ENCODE measurements at regions of chr6 and their contacts with region 1.

Region 1: DNA sequence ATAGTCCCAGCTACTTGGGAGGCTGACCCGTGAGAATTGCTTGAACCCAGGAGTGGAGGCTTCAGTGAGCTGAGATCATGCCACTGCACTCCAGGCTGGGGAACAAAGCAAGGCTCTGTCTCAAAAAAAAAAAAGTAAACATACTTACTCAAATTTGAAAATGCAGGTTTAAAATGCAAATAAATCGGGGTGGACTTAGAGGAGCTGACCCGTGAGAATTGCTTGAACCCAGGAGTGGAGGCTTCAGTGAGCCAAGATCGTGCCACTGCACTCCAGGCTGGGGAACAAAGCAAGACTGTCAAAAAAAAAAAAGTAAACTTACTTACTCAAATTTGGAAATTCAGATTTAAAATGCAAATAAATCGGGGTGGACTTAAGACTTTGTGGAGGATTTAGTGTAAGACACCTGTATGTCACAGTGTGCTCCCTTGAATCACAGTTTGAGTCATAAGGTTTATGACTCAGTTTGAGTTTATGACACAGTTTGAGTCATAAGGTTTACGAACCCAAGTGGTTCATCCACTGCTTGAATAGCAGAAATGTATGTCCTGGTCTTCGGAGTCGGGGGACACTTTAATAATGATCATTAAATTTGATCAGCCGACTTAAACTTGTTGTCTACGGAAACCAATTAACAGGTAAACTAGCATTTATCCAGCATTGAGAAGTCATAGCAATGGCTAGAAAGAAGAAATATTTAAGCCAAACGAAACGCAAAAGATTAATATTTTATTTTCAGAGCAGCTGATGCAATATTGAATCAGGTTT is 6.7 kb upstream of the MRPS10 start:
- DNase-seq: peak; percentile 17
- H3K4me3 Mint-ChIP-seq: peak overlapping the region; percentile 36
- H3K27ac Mint-ChIP-seq: peak overlapping the region; percentile 80
- H3K4me1 Mint-ChIP-seq: peaks cover 22% of the 10 kb centered on the region
- H3K27me3 Mint-ChIP-seq: no peaks in the 10 kb centered on the region

Region 2: DNA sequence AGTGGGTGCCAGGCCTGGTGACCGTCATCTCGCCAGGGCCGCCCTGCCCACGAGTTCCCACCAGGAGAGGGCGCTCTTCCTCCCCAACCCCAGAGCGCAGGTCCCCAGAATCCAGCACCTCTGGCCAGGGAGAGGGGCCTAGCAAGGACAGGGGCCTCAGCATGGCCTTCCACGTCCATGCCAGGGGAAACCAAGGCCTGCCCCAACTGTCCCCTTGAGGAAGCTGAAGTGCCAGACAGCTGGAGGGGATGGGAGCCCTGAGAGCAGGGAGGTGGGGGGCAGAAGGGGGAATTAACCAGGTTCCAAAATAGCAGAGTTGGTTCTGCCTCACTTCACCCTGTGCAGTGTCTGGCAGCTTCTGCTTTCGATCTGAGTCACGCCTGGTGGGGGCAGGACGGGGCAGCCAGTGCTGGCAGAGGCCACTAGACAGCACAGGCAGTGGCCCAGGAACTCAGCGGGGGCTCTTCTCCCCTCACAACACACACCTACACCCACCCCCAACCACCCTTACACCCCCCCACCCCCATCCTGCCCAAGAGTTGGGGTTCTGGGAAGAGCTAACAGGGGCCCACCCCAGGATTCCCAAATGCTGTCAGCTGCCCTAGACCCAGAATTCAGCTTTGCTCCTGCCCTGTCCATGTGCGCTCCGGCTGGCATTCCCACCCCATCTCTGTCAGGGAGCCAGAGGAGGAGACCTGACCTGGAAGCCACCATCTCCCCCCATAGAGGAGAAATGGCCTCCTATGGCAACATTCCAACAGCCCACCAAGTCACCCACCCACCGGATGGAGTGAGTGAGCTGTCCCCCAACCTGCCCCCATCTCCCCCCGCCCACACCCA is 518.2 kb before region 1 on chr6:
- CTCF ChIA-PET with region 1: no interaction called
- intact Hi-C with region 1: no loop called
- DNase-seq: peak; percentile 88
- H3K4me3 Mint-ChIP-seq: peak overlapping the region; percentile 26
- H3K27ac Mint-ChIP-seq: peak overlapping the region; percentile 87
- H3K4me1 Mint-ChIP-seq: peaks cover 29% of the 10 kb centered on the region
- H3K27me3 Mint-ChIP-seq: no peaks in the 10 kb centered on the region

Region 3: DNA sequence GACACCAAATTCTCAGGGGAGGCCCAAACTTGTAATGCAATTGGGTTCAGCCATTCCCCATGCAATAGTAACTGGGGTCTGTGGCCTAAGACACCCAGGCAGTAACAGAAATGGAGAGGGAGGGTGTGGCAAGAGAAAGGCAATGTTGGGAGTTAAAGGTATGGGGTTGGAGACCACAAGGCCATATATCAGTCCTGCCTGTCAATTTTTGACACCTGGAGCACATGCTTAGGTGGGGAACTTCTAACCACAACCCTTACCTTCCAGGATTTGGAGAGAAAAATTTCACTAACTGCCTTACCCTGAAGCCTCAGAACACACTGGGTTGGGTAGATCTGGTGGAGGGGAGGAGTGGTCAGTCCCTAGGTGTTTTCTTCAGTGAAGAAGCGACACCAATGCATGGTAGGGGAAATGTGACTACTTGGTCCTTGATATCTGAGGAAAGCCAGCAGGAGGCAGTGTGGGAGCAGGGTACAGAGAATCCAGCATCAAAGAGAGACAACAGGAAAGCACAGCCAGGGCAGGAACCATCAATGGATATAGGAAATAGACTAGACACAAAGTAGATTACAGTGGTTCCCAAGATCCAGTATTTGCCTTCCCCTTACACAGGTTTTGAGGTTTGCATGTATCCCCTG is 322.4 kb before region 1 on chr6:
- CTCF ChIA-PET with region 1: no interaction called
- intact Hi-C with region 1: no loop called
- DNase-seq: peak; percentile 82
- H3K4me3 Mint-ChIP-seq: no peak overlapping the region
- H3K27ac Mint-ChIP-seq: no peak overlapping the region
- H3K4me1 Mint-ChIP-seq: peaks cover 16% of the 10 kb centered on the region
- H3K27me3 Mint-ChIP-seq: no peaks in the 10 kb centered on the region

Region 4: DNA sequence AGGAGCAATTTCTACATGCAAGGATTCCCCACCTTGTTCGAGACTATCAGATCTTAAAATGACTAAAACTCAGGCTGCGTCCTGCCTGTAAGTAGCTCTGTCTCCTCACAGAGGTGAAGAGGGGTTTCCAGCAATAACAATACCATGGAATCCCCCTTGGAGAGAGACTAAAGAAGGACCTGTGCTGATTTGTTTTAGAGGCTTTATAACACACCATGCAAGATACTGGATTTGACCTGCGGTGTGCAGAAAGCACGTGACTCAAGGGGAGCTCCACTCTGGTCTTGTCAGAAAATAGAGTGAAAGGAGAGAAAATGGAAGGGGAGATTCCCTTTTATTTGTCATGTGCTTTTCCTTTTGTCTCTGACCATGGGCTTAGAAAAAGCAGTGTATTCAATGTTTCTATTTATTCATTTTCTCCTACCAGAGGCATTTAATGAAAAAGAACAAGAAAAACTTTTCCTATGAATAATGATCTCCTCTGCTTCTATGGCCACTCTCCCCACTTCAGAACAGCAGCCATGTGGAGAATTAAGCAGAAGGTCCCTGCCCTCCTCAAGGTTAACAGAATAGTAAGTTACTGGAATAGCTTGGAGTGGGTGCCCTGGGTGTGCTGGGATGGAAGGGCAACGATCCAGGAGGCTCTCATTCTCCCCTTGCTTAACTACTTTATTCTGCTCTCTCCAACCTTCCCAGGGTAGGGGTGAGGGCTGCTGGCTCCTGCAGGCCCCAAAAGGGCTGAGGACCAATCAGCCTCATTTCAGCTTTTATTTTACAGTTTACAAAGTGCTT is 12.5 kb after region 1 on chr6:
- CTCF ChIA-PET with region 1: interaction called, 3 read pairs
- intact Hi-C with region 1: loop called (anchors 1 kb)
- DNase-seq: peak; percentile 56
- H3K4me3 Mint-ChIP-seq: no peak overlapping the region
- H3K27ac Mint-ChIP-seq: peak overlapping the region; percentile 76
- H3K4me1 Mint-ChIP-seq: peaks cover 13% of the 10 kb centered on the region
- H3K27me3 Mint-ChIP-seq: no peaks in the 10 kb centered on the region

Region 5: DNA sequence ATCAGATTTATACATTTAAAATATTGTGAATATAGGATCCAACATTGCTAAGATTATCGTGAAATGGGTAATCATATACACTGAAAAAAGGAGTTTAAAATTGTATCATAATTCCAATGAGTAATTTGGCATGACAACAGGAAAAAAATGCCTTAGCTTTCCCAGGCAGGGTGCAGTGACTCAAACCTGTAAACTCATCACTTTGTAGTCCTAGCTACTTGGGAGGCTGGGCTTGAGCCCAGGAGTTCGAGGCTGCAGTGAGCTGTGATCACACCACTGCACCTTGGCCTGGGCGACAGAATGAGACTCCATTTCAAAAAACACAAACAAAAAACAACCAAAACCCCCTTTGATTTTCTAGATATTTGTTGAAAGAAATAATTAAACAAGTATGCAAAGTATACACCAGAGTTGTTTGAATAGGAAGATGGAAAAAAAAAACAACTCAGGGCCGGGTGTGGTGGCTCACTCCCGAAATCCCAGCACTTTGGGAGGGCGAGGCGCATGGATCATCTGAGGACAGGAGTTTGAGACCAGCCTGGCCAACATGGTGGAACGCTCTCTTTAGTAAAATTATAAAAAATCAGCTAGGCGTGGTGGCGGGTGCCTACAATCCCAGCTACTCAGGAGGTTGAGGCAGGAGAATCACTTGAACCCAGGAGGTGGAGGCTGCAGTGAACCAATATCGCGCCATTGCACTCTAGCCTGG is 128.6 kb after region 1 on chr6:
- CTCF ChIA-PET with region 1: no interaction called
- intact Hi-C with region 1: loop called (anchors 1 kb)
- DNase-seq: no peak
- H3K4me3 Mint-ChIP-seq: no peak overlapping the region
- H3K27ac Mint-ChIP-seq: no peak overlapping the region
- H3K4me1 Mint-ChIP-seq: peaks cover 11% of the 10 kb centered on the region
- H3K27me3 Mint-ChIP-seq: no peaks in the 10 kb centered on the region